IMR-90 (cell line): ENCODE measurements at regions of chr12 and their contacts with region 1.

Region 1: DNA sequence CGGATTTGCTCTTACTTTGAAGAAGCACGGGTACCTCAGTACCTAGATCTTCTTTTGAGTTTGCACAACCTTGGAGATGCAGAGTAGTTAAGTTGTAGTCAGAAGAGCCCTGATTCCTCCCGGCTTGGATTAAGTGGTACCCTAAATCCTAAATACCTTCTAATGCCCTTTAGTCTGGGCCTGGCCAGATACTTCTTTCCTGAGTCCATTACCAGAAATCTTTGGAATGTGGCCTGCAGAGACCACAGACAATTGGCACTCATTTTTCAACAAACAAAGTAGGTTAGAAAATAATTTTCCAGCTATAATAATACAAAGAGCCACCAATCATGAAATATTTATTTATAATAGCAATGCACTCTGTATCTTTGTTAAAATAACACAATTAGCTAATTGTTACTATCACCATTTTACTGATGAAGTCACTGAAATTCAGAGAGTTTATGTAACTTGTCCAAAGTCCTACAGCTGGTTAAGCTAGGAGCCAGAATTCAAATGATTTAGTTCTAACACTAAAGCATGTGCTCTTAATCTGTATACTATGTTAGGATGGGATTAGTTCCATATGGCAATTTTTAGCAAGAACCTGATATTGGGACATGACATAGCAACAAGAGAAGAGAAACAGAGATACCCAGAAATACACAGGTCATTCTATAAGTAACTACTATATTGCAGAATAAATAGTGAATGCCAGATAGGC is 132.1 kb upstream of the PDZRN4 start:
- DNase-seq: peak; percentile 6
- ATAC-seq: peak; percentile 56
- H3K4me3 ChIP-seq: no peak overlapping the region
- H3K27ac ChIP-seq: peak overlapping the region; percentile 8; the same call in 1 of the 2 replicates
- H3K4me1 ChIP-seq: peaks cover 4% of the 10 kb centered on the region
- H3K27me3 ChIP-seq: no peaks in the 10 kb centered on the region
- CTCF ChIP-seq: no peak
- POLR2A ChIP-seq: no peak
- RAD21 ChIP-seq: no peak

Region 2: GRCh38 chr12:40953076-40953475 is 103.0 kb before region 1 on chr12:
- CTCF ChIA-PET with region 1: no interaction called
- POLR2A ChIA-PET with region 1: no interaction called
- dilution Hi-C with region 1: no loop called
- in situ Hi-C with region 1: no loop called
- intact Hi-C with region 1: loop called (anchors 10 kb)
- DNase-seq: peak; percentile 46
- ATAC-seq: no peak
- H3K4me3 ChIP-seq: no peak overlapping the region
- H3K27ac ChIP-seq: no peak overlapping the region
- H3K4me1 ChIP-seq: no peaks in the 10 kb centered on the region
- H3K27me3 ChIP-seq: no peaks in the 10 kb centered on the region
- CTCF ChIP-seq: no peak
- POLR2A ChIP-seq: no peak
- RAD21 ChIP-seq: no peak

Region 3: DNA sequence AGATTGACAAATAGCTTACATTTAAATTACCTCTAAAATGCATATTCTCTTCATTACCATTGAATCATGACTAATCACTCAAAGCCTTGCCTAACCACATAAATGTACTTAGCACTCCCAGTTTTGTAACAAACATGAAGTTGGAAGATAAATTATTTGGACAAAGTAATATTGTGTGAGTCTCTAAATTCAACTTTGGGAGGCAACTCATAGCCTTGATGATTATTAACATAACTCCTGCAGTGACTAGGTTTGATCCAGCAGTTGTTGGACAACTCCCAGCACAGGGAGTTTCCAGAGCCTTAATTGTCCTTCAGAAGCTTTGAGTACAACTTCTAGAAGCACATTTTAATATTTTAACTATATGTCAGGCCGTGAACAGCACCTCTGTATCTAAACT is 21.3 kb before region 1 on chr12:
- CTCF ChIA-PET with region 1: no interaction called
- POLR2A ChIA-PET with region 1: no interaction called
- dilution Hi-C with region 1: no loop called
- in situ Hi-C with region 1: no loop called
- intact Hi-C with region 1: no loop called
- DNase-seq: peak; percentile 16
- ATAC-seq: peak; percentile 29
- H3K4me3 ChIP-seq: no peak overlapping the region
- H3K27ac ChIP-seq: no peak overlapping the region
- H3K4me1 ChIP-seq: no peaks in the 10 kb centered on the region
- H3K27me3 ChIP-seq: no peaks in the 10 kb centered on the region
- CTCF ChIP-seq: no peak
- POLR2A ChIP-seq: no peak
- RAD21 ChIP-seq: no peak

Region 4: GRCh38 chr12:41120211-41120610 is 64.2 kb after region 1 on chr12:
- CTCF ChIA-PET with region 1: no interaction called
- POLR2A ChIA-PET with region 1: no interaction called
- dilution Hi-C with region 1: no loop called
- in situ Hi-C with region 1: no loop called
- intact Hi-C with region 1: no loop called
- DNase-seq: no peak
- ATAC-seq: no peak
- H3K4me3 ChIP-seq: no peak overlapping the region
- H3K27ac ChIP-seq: no peak overlapping the region
- H3K4me1 ChIP-seq: no peaks in the 10 kb centered on the region
- H3K27me3 ChIP-seq: no peaks in the 10 kb centered on the region
- CTCF ChIP-seq: no peak
- POLR2A ChIP-seq: no peak
- RAD21 ChIP-seq: no peak